ENCODE measurements at regions of chr6 and their contacts with region 1.

Region 1: DNA sequence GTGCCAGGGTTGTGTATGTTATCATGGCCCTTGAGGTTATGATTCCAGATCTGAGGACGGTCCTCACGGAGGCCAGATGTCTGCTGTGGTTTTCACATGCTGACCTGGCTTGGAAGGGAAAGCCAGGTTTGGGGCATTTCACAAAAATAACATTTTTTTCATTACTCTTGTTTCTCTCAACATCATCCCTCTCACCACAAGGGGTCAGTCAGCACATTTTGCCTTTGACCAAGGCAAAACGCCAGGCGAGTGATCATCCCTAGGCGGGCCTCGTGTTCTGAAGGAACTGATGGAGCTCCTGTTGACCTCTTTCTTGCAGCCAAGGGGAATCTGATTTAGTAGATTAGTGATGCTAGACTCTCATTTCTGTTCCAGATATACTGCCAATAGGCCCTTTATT is 133.5 kb downstream of the TBC1D7 start:
- DNase-seq: peak; percentile 78
- CTCF ChIP-seq: peak; percentile 73

Region 2: GRCh38 chr6:13277836-13278563 is 83.1 kb after region 1 on chr6:
- CTCF ChIA-PET with region 1: interaction called, 17 read pairs
- POLR2A ChIA-PET with region 1: no interaction called
- DNase-seq: no peak
- CTCF ChIP-seq: peak; percentile 46

Measured in GM10248 (cell line).